Esophagus muscularis mucosa (tissue), 4 donors: ENCODE measurements at regions of chr1 and their contacts with region 1.

Region 1: DNA sequence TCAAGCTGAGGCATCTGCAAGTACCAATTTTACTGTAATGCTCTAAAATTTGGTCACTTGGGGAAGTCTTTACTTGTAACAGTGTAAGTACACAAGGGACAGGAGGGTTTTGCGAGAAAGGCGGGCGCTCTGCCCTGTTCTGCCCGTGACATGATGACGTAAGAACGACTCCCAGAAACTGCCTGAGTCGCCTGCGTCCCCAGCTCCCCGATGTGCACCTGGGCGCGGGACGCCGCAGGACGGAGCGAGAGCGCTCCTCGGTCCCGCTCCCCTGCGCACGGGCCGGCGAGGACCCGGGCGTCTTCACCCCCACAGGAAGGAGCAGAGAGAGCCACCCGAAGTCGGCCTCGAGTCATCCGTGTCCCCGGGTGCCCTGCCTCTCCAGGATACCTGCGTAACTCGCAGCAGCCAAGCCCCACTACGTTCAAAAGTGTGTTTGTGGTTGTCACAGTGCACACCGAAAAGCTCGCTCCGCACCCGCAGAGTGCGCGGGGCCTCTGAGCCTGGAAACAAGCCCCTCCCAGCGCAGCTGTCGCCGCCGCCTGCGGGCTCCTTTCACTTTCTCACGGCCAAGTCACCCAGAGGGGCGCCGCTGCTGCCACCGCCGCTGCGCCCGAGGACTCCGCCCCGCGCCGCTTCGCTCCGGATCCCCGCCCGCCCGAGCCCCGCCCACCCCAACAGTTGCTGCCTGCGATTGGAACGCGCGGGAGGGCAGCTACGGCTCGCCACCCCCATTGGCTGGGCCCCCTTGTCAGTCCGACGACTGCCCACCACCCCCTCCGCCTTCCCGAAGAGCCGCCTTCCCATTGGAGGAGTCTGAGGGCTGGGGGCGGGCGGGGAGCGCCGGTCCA is 3.2 kb upstream of the ZBTB18 start:
- DNase-seq: peak; percentile 99
- H3K4me3 ChIP-seq: peak overlapping the region; percentile 71 to 97 (median 84)
- H3K27ac ChIP-seq: peak overlapping the region; percentile 95 to 99 (median 96)
- H3K4me1 ChIP-seq: peaks cover 29 to 39% (median 36%) of the 10 kb centered on the region in 4 donors
- H3K27me3 ChIP-seq: no peaks in the 10 kb centered on the region
- CTCF ChIP-seq: no peak
- EP300 ChIP-seq: peak; percentile 10
- POLR2A ChIP-seq: peak; percentile 87

Region 2: GRCh38 chr1:243343970-243344937 is 703.6 kb before region 1 on chr1:
- intact Hi-C with region 1: loop called (anchors 10 kb)
- DNase-seq: no peak
- H3K4me3 ChIP-seq: no peak overlapping the region
- H3K27ac ChIP-seq: no peak overlapping the region
- H3K4me1 ChIP-seq: no peaks in the 10 kb centered on the region
- H3K27me3 ChIP-seq: no peaks in the 10 kb centered on the region
- CTCF ChIP-seq: peak; percentile 68 to 70 (median 69)
- EP300 ChIP-seq: no peak
- POLR2A ChIP-seq: no peak

Region 3: DNA sequence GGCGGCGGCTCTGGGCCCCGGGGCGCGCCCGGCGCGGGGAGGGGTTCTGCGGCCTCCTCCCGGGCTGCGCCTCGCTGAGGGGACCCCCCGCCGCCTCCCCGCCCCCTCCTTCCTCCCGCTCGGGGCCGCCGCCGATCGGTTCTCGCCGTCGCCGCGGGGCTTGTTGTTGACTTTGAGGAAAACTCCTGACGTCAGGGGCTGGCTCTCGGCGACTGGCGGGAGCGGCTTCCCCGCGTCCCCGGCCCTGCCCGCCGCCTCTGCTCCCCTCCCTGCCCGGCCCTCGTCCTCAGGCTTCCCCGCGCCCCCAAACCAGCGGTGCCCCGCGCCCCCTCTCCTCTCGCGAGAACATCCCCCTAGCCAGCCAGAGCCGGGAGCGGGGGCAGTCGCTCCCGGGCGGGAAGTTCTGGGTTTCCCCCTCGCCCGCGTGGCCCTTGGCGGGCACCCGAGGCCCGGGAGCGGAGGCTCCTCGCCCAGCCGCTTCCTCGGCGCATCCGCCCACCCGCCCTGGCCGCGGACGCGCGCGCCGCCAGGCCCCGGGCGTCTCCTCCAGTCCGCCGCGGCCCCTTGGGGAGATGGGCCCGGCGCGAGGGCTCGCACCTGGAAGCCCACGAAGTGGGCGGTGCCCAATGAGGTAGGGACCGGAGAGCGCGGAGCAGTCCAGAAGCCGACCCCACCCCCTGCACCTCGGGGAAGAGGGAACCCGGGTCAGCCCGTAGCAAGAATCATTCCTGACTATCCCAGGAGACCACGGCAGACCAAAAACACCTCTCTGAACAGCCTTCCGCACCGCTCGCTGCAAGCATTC is 197.2 kb before region 1 on chr1:
- intact Hi-C with region 1: loop called (anchors 1 kb)
- DNase-seq: no peak
- H3K4me3 ChIP-seq: peak overlapping the region; percentile 93 to 99 (median 96)
- H3K27ac ChIP-seq: peak overlapping the region; percentile 97 to 99 (median 99)
- H3K4me1 ChIP-seq: peaks cover 3 to 34% (median 30%) of the 10 kb centered on the region in 4 donors
- H3K27me3 ChIP-seq: no peaks in the 10 kb centered on the region
- CTCF ChIP-seq: no peak
- EP300 ChIP-seq: no peak
- POLR2A ChIP-seq: no peak

Region 4: GRCh38 chr1:244163861-244164562 is 116.2 kb after region 1 on chr1:
- intact Hi-C with region 1: loop called (anchors 5 kb)
- DNase-seq: no peak
- H3K4me3 ChIP-seq: no peak overlapping the region
- H3K27ac ChIP-seq: peak overlapping the region; percentile 56 to 74 (median 70)
- H3K4me1 ChIP-seq: peaks cover 13 to 21% (median 16%) of the 10 kb centered on the region in 4 donors
- H3K27me3 ChIP-seq: no peaks in the 10 kb centered on the region
- CTCF ChIP-seq: no peak
- EP300 ChIP-seq: no peak
- POLR2A ChIP-seq: no peak

Region 5: GRCh38 chr1:244272471-244273261 is 224.8 kb after region 1 on chr1:
- intact Hi-C with region 1: loop called (anchors 2 kb)
- DNase-seq: no peak
- H3K4me3 ChIP-seq: no peak overlapping the region
- H3K27ac ChIP-seq: peak overlapping the region; percentile 64 to 74 (median 72)
- H3K4me1 ChIP-seq: peaks cover 0 to 25% (median 23%) of the 10 kb centered on the region in 4 donors
- H3K27me3 ChIP-seq: no peaks in the 10 kb centered on the region
- CTCF ChIP-seq: peak; percentile 88 to 96 (median 93)
- EP300 ChIP-seq: no peak
- POLR2A ChIP-seq: no peak

Region 6: GRCh38 chr1:244445320-244446181 is 397.7 kb after region 1 on chr1:
- intact Hi-C with region 1: loop called (anchors 10 kb)
- DNase-seq: no peak
- H3K4me3 ChIP-seq: peak overlapping the region in 1 of 4 donors; percentile 19
- H3K27ac ChIP-seq: peak overlapping the region; percentile 96 to 97 (median 96)
- H3K4me1 ChIP-seq: peaks cover 28 to 88% (median 81%) of the 10 kb centered on the region in 4 donors
- H3K27me3 ChIP-seq: no peaks in the 10 kb centered on the region
- CTCF ChIP-seq: no peak
- EP300 ChIP-seq: no peak
- POLR2A ChIP-seq: no peak

Region 7: GRCh38 chr1:244599937-244600350 is 552.1 kb after region 1 on chr1:
- intact Hi-C with region 1: no loop called
- DNase-seq: no peak
- H3K4me3 ChIP-seq: no peak overlapping the region
- H3K27ac ChIP-seq: peak overlapping the region in 2 of 4 donors; percentile 23 to 48
- H3K4me1 ChIP-seq: no peaks in the 10 kb centered on the region
- H3K27me3 ChIP-seq: no peaks in the 10 kb centered on the region
- CTCF ChIP-seq: no peak
- EP300 ChIP-seq: no peak
- POLR2A ChIP-seq: no peak